IMR-90 (cell line): ENCODE measurements at regions of chr5 and their contacts with region 1.

Region 1: GRCh38 chr5:58460732-58461286 is 923 bp upstream of the PLK2 start:
- DNase-seq: peak; percentile 80
- ATAC-seq: peak; percentile 65
- H3K4me3 ChIP-seq: peak overlapping the region; percentile 85
- H3K27ac ChIP-seq: peak overlapping the region; percentile 77
- H3K4me1 ChIP-seq: no peaks in the 10 kb centered on the region; the same call in none of the 2 replicates
- H3K27me3 ChIP-seq: no peaks in the 10 kb centered on the region
- CTCF ChIP-seq: peak; percentile 88
- POLR2A ChIP-seq: no peak
- RAD21 ChIP-seq: peak; percentile 96

Region 2: GRCh38 chr5:57298295-57298984 is 1162.4 kb before region 1 on chr5:
- CTCF ChIA-PET with region 1: interaction called, 14 read pairs
- POLR2A ChIA-PET with region 1: interaction called, 8 read pairs
- dilution Hi-C with region 1: no loop called
- in situ Hi-C with region 1: loop called (anchors 5 kb)
- intact Hi-C with region 1: loop called (anchors 1 kb)
- DNase-seq: peak; percentile 84
- ATAC-seq: peak; percentile 73
- H3K4me3 ChIP-seq: no peak overlapping the region
- H3K27ac ChIP-seq: peak overlapping the region; percentile 42; the same call in 1 of the 2 replicates
- H3K4me1 ChIP-seq: peaks cover 10% of the 10 kb centered on the region
- H3K27me3 ChIP-seq: 0 out of 2 replicates have a peak, but pooled peaks cover 2% of the 10 kb centered on the region
- CTCF ChIP-seq: peak; percentile 90
- POLR2A ChIP-seq: no peak
- RAD21 ChIP-seq: peak; percentile 91

Region 3: DNA sequence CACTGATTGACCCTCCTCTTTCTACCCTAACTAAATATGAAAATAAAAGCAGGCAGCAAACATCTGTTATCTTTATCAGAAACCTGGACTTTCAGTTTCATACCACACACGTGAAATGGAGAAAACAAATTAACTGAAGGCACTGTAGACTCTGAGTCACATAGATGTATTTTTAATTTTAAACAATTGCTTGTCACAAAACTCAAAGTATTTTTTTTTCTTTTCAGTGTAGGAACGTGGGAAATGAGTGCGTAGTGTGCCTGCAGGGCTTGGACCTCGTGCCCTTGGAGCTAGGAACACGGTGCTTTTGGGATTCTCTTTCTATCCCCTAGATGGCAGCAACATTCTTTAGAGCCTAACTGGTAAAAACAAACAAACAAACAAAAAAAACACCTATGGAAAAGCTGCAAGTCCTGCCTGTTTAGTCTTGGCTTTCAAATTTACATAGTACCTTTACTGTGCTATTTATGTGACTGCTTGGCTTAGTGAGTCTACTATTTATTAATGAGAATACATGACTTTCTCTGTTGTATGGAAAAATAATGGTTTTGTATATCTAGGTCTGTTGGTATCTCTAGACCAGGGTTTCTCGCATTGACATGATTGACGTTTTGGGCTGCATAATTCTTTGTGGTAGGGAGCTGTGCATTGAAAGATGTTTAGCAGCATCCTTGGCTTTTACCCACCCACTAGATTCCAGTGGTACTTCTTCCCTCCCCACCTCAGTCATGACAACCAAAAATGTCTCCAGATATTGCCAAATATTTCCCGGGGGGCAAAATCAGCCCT is 961.4 kb before region 1 on chr5:
- CTCF ChIA-PET with region 1: interaction called, 13 read pairs
- POLR2A ChIA-PET with region 1: no interaction called
- dilution Hi-C with region 1: no loop called
- in situ Hi-C with region 1: loop called (anchors 10 kb)
- intact Hi-C with region 1: loop called (anchors 1 kb)
- DNase-seq: peak; percentile 69
- ATAC-seq: 0 out of 2 replicates have a peak, but pooled peaks have one; percentile 9
- H3K4me3 ChIP-seq: no peak overlapping the region
- H3K27ac ChIP-seq: no peak overlapping the region; the same call in 1 of the 2 replicates
- H3K4me1 ChIP-seq: peaks cover 13% of the 10 kb centered on the region
- H3K27me3 ChIP-seq: no peaks in the 10 kb centered on the region
- CTCF ChIP-seq: peak; percentile 77
- POLR2A ChIP-seq: no peak
- RAD21 ChIP-seq: peak; percentile 84

Region 4: GRCh38 chr5:57825031-57825683 is 635.7 kb before region 1 on chr5:
- CTCF ChIA-PET with region 1: no interaction called
- POLR2A ChIA-PET with region 1: no interaction called
- dilution Hi-C with region 1: no loop called
- in situ Hi-C with region 1: no loop called
- intact Hi-C with region 1: loop called (anchors 1 kb)
- DNase-seq: peak; percentile 88
- ATAC-seq: peak; percentile 95
- H3K4me3 ChIP-seq: no peak overlapping the region
- H3K27ac ChIP-seq: peak overlapping the region; percentile 91; the same call in 1 of the 2 replicates
- H3K4me1 ChIP-seq: peaks cover 3% of the 10 kb centered on the region
- H3K27me3 ChIP-seq: no peaks in the 10 kb centered on the region
- CTCF ChIP-seq: no peak
- POLR2A ChIP-seq: no peak; the same call in 1 of the 2 replicates
- RAD21 ChIP-seq: no peak

Region 5: DNA sequence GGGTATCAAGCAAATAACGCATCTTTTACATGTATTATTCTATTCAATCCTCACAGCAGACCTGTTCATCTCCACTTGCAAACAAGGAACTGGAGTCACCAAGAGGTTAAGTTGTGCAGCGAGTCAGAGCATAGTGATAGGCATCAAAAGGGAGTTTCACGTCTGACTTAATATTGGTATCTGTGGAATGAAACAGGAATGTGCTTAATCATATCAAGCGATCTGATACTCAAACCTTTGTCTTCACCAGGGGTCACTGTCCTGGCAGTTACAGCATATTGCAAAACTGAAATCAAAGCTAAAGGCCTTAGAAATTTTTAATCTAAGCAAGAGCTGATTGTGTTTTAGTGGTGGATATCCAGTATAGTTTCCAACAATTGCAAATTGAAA is 272.6 kb before region 1 on chr5:
- CTCF ChIA-PET with region 1: no interaction called
- POLR2A ChIA-PET with region 1: interaction called, 4 read pairs
- dilution Hi-C with region 1: no loop called
- in situ Hi-C with region 1: no loop called
- intact Hi-C with region 1: loop called (anchors 2 kb)
- DNase-seq: peak; percentile 70
- ATAC-seq: peak; percentile 83
- H3K4me3 ChIP-seq: no peak overlapping the region
- H3K27ac ChIP-seq: no peak overlapping the region
- H3K4me1 ChIP-seq: peaks cover 3% of the 10 kb centered on the region
- H3K27me3 ChIP-seq: no peaks in the 10 kb centered on the region
- CTCF ChIP-seq: no peak
- POLR2A ChIP-seq: no peak
- RAD21 ChIP-seq: no peak

Region 6: GRCh38 chr5:58311519-58311918 is 149.3 kb before region 1 on chr5:
- CTCF ChIA-PET with region 1: no interaction called
- POLR2A ChIA-PET with region 1: no interaction called
- dilution Hi-C with region 1: no loop called
- in situ Hi-C with region 1: no loop called
- intact Hi-C with region 1: no loop called
- DNase-seq: no peak
- ATAC-seq: no peak
- H3K4me3 ChIP-seq: no peak overlapping the region
- H3K27ac ChIP-seq: no peak overlapping the region
- H3K4me1 ChIP-seq: no peaks in the 10 kb centered on the region
- H3K27me3 ChIP-seq: no peaks in the 10 kb centered on the region
- CTCF ChIP-seq: no peak
- POLR2A ChIP-seq: no peak
- RAD21 ChIP-seq: no peak